ENCODE measurements at regions of chr19 and their contacts with region 1.

Region 1: DNA sequence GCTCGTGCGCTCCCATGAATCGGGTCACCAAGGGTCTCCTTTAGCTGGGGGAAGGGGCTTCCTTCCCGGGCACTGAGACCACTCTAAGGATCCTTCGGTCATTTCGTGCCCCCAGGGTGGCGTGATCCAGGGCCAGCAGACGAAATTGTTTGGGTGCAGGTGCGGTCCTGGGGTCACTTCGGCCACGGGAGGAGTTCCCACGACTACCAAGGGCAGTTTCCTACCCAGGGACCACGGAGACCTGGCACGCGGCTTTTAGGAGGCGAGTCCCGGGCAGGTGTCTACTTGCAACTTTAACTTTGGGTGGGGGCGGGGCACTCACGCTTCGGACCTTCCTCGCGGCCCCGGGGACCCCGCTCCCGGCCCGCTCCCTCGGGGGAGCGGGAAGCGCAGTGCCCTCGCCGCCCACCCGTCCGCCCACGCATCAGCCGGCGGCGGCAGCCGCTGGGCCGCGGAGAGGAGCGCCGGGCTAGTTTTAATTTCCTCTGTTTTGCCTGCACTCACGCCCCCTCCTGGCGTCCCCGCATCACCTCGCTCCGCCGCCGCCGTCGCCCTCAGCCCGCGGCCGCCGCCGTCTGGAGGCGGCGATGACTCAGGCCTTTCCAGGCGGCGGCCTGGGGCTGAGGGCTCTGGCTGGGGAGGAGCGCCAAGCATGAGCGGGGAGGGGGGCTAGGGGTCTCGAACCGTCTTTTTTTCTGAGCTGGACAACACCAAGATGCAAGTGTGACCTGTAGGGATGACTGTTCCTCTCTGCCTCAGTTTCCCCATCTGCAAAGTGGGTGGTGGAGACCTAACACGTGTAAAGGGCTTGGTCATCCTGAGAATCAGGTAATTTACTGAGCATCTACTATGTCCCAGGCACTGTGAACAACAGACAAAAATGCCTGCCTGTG is 21.8 kb downstream of the OLFM2 start:
- DNase-seq: peak in 7 of 10 donors; percentile 48 to 79 (median 59)
- H3K4me3 ChIP-seq: peak overlapping the region in 58 of 59 donors; percentile 26 to 71 (median 58)
- H3K27ac ChIP-seq: peak overlapping the region in 6 of 59 donors; percentile 2 to 81 (median 22)
- H3K27me3 ChIP-seq: peaks cover 0 to 33% (median 5%) of the 10 kb centered on the region in 45 donors
- CTCF ChIP-seq: peak in 51 of 56 donors; percentile 23 to 70 (median 48)

Region 2: GRCh38 chr19:9847087-9847671 is 67.4 kb before region 1 on chr19:
- intact Hi-C with region 1: loop called in 1 of 2 experiments (anchors 5 kb)
- DNase-seq: peak in 9 of 10 donors; percentile 51 to 88 (median 77)
- H3K4me3 ChIP-seq: peak overlapping the region in 7 of 59 donors; percentile 2 to 18 (median 10)
- H3K27ac ChIP-seq: peak overlapping the region in 53 of 59 donors; percentile 1 to 95 (median 77)
- H3K27me3 ChIP-seq: no peaks in the 10 kb centered on the region
- CTCF ChIP-seq: peak in 52 of 56 donors; percentile 14 to 62 (median 46)

Region 3: GRCh38 chr19:9936326-9937000 is 21.9 kb after region 1 on chr19 and contains the start of gene OLFM2:
- intact Hi-C with region 1: no loop called
- DNase-seq: no peak
- H3K4me3 ChIP-seq: peak within 1 kb of the TSS; percentile 7 to 70 (median 52)
- H3K27ac ChIP-seq: peak within 1 kb of the TSS in 37 of 59 donors; percentile 14 to 79 (median 59)
- H3K27me3 ChIP-seq: peaks cover 0 to 60% (median 23%) of the 10 kb centered on the region in 45 donors
- CTCF ChIP-seq: no peak
- total RNA-seq, gene OLFM2: 50.2 to 350 (median 106) TPM